CD8-positive, alpha-beta T cell (primary cell): ENCODE measurements at regions of chr5 and their contacts with region 1.

Region 1: DNA sequence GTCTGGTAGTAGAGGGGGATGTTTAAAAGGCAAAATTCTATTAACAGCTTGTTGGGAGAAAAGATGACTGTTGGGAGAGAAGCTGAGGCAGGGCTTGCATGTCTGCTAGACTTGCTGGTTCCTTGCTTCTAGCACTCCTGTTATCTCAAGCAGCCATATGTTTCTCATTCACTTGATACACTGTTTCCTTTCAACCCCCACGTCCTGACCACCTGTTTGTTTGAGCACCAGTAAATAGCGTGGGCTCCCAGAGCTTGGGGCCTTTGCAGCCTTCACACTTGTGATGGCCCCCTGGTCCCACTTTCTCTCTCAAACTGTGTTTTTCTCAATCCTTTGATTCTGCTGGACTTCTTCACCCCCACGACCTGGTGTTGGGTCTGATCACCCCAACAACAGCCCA is 111.7 kb upstream of the TMEM161B start:
- DNase-seq: no peak
- ATAC-seq: no peak
- H3K4me3 ChIP-seq: no peak overlapping the region
- H3K4me3 Mint-ChIP-seq: no peak overlapping the region
- H3K27ac ChIP-seq: no peak overlapping the region
- H3K27ac Mint-ChIP-seq: no peak overlapping the region
- H3K4me1 ChIP-seq: no peaks in the 10 kb centered on the region
- H3K4me1 Mint-ChIP-seq: no peaks in the 10 kb centered on the region
- H3K27me3 ChIP-seq: no peaks in the 10 kb centered on the region
- H3K27me3 Mint-ChIP-seq: peaks cover 11% of the 10 kb centered on the region
- CTCF ChIP-seq: no peak

Region 2: DNA sequence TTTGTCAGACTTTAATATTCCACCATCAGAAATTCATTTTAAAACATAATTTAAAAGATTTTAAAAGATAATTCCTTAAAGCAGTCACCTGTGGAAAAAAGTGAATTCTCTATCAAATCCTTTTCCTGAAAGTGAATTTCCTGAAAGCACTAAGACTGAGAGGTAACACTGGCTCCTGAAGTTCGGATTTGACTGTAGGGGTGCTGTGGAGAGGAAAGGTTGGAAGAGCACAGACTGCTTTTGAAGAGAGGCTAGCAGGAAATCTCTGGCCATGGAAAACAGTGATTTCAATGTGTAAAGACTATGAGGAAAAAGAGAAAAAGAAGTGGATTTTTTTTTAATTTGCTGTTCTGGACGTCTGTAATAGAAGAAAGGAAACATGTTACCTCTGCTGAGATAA is 76.0 kb before region 1 on chr5:
- CTCF ChIA-PET with region 1: no interaction called
- POLR2A ChIA-PET with region 1: no interaction called
- intact Hi-C with region 1: no loop called
- DNase-seq: no peak
- ATAC-seq: no peak
- H3K4me3 ChIP-seq: no peak overlapping the region
- H3K4me3 Mint-ChIP-seq: no peak overlapping the region
- H3K27ac ChIP-seq: no peak overlapping the region
- H3K27ac Mint-ChIP-seq: no peak overlapping the region
- H3K4me1 ChIP-seq: no peaks in the 10 kb centered on the region
- H3K4me1 Mint-ChIP-seq: no peaks in the 10 kb centered on the region
- H3K27me3 ChIP-seq: no peaks in the 10 kb centered on the region
- H3K27me3 Mint-ChIP-seq: peaks cover 2% of the 10 kb centered on the region
- CTCF ChIP-seq: no peak

Region 3: DNA sequence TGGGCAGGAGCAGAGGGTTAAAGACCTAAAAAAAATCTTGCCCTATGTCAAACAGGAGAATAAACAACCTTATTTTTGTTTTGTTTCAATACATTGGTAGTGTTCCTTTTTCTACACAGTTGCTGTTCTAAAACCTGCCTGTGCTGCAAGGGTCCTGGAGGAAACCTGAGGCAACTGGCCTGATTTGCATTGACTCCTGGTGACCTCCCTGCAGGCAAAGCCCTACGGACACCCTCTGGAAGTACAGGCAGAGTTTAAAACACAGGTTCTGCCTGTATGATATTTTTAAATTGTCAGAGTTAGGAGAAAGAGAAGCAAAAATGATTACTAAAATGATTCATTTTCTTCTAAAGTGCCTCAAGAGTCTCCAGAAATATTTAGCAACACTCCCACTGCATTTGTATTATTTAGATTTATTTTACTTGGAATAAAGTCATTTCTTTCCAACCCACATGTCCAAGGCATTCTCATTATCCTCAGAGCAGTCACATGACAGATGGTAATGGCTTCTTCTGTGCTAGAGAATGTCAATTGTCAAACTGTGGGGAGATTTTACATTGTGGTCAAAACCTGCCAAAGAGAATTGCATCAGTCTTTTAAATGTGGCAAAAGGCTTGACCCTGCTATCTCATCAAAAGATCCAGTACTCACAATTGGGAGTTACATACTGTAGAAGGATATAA is 1469.6 kb after region 1 on chr5:
- CTCF ChIA-PET with region 1: no interaction called
- POLR2A ChIA-PET with region 1: no interaction called
- intact Hi-C with region 1: loop called in 1 of 2 experiments (anchors 5 kb)
- DNase-seq: no peak
- ATAC-seq: no peak
- H3K4me3 ChIP-seq: no peak overlapping the region
- H3K4me3 Mint-ChIP-seq: no peak overlapping the region
- H3K27ac ChIP-seq: no peak overlapping the region
- H3K27ac Mint-ChIP-seq: no peak overlapping the region
- H3K4me1 ChIP-seq: no peaks in the 10 kb centered on the region
- H3K4me1 Mint-ChIP-seq: no peaks in the 10 kb centered on the region
- H3K27me3 ChIP-seq: no peaks in the 10 kb centered on the region
- H3K27me3 Mint-ChIP-seq: no peaks in the 10 kb centered on the region
- CTCF ChIP-seq: no peak